Activated naive CD4-positive, alpha-beta T cell treated with anti-CD3 and anti-CD28 coated beads, Interleukin-2, amount 10 ng/mL, durations not matched to agents 7 days and 5 days (primary cell): ENCODE measurements at regions of chr1 and their contacts with region 1.

Region 1: GRCh38 chr1:152001391-152002249 is 8.0 kb upstream of the S100A10 start:
- DNase-seq: peak; percentile 88
- H3K4me3 Mint-ChIP-seq: no peak overlapping the region
- H3K27ac Mint-ChIP-seq: no peak overlapping the region
- H3K4me1 Mint-ChIP-seq: peaks cover 10% of the 10 kb centered on the region
- H3K27me3 Mint-ChIP-seq: peaks cover 60% of the 10 kb centered on the region

Region 2: DNA sequence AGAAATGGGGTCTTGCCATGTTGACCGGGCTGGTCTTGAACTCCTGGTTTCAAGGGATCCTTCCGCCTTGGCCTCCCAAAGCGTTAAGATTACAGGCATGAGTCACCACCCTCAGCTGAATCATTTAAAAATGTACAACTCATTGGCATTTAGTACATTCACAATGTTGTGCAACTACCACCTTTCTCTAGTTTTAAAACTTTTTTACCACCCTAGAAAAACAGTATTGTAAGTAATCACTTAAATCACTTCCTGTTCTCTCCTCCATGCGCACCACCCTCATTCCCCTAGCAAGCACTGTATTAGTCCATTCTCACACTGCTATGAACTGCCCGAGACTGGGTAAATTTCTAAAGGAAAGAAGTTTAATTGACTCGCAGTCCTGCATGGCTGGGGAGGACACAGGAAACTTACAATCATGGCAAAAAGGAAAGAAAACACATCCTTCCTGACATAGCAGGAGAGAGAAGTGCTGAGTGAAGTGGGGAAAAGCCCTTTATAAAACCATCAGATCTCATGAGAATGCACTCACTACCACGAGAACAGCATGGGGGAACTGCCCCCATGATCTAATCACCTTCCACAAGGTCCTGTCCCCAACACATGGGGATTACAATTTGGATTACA is 133.7 kb before region 1 on chr1:
- CTCF ChIA-PET with region 1: no interaction called
- DNase-seq: no peak
- H3K4me3 Mint-ChIP-seq: no peak overlapping the region
- H3K27ac Mint-ChIP-seq: no peak overlapping the region
- H3K4me1 Mint-ChIP-seq: no peaks in the 10 kb centered on the region
- H3K27me3 Mint-ChIP-seq: peaks cover 15% of the 10 kb centered on the region

Region 3: GRCh38 chr1:151898513-151898991 is 103.1 kb before region 1 on chr1:
- CTCF ChIA-PET with region 1: interaction called, 21 read pairs
- DNase-seq: peak; percentile 69
- H3K4me3 Mint-ChIP-seq: peak overlapping the region; percentile 52
- H3K27ac Mint-ChIP-seq: peak overlapping the region; percentile 93
- H3K4me1 Mint-ChIP-seq: peaks cover 58% of the 10 kb centered on the region
- H3K27me3 Mint-ChIP-seq: no peaks in the 10 kb centered on the region

Region 4: GRCh38 chr1:151934048-151934493 is 67.5 kb before region 1 on chr1:
- CTCF ChIA-PET with region 1: interaction called, 181 read pairs
- DNase-seq: peak; percentile 51
- H3K4me3 Mint-ChIP-seq: no peak overlapping the region
- H3K27ac Mint-ChIP-seq: no peak overlapping the region
- H3K4me1 Mint-ChIP-seq: peaks cover 2% of the 10 kb centered on the region
- H3K27me3 Mint-ChIP-seq: peaks cover 14% of the 10 kb centered on the region

Region 5: GRCh38 chr1:151976858-151977257 is 24.8 kb before region 1 on chr1:
- CTCF ChIA-PET with region 1: interaction called, 104 read pairs
- DNase-seq: no peak
- H3K4me3 Mint-ChIP-seq: no peak overlapping the region
- H3K27ac Mint-ChIP-seq: no peak overlapping the region
- H3K4me1 Mint-ChIP-seq: peaks cover 21% of the 10 kb centered on the region
- H3K27me3 Mint-ChIP-seq: peaks cover 4% of the 10 kb centered on the region

Region 6: DNA sequence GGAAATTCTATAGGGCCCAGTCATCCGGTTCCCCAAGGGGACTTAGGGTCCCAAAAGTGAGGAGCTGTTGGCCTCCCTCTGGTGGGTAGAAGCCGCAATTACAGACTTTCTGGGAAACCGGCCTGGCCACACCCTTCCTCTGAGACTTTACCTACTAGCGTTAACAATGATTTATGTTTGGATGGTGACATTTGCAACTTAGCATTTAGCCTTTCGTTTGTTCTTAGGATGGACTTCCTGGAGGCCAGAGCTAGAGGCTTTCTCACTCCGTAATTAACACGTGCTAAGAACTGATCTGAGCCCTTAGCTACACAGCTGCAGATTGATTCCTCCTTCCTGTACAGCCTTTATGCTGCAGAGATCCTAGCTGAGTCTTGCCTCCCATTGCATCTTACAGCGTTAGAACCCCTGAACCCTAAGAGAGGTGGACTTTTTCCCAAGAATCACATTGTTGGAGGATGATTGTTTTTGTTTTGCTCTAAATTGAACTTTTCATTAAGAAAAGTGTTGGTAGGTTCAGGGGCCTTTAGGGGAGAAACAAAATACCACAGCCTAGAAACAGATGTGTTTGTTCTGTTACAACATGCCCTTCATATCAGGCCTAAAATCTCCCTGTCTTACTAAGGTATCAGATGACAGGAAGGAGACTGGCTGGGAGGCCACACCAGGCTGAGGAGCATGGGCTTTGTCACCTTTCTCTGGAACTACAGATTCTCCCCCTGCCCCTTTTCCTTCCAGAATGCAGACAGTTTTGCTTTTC is 33.2 kb after region 1 on chr1:
- CTCF ChIA-PET with region 1: interaction called, 11 read pairs
- DNase-seq: peak; percentile 80
- H3K4me3 Mint-ChIP-seq: peak overlapping the region; percentile 99
- H3K27ac Mint-ChIP-seq: peak overlapping the region; percentile 98
- H3K4me1 Mint-ChIP-seq: peaks cover 49% of the 10 kb centered on the region
- H3K27me3 Mint-ChIP-seq: no peaks in the 10 kb centered on the region

Region 7: GRCh38 chr1:152359906-152360305 is 358.3 kb after region 1 on chr1 and contains the start of gene FLG2:
- CTCF ChIA-PET with region 1: no interaction called
- DNase-seq: no peak
- H3K4me3 Mint-ChIP-seq: no peak within 1 kb of the TSS
- H3K27ac Mint-ChIP-seq: no peak within 1 kb of the TSS
- H3K4me1 Mint-ChIP-seq: no peaks in the 10 kb centered on the region
- H3K27me3 Mint-ChIP-seq: peaks cover 5% of the 10 kb centered on the region

Region 8: GRCh38 chr1:152596986-152597385 is 595.4 kb after region 1 on chr1:
- CTCF ChIA-PET with region 1: no interaction called
- DNase-seq: no peak
- H3K4me3 Mint-ChIP-seq: no peak overlapping the region
- H3K27ac Mint-ChIP-seq: no peak overlapping the region
- H3K4me1 Mint-ChIP-seq: no peaks in the 10 kb centered on the region
- H3K27me3 Mint-ChIP-seq: no peaks in the 10 kb centered on the region